ENCODE measurements at regions of chr22 and their contacts with region 1.

Region 1: DNA sequence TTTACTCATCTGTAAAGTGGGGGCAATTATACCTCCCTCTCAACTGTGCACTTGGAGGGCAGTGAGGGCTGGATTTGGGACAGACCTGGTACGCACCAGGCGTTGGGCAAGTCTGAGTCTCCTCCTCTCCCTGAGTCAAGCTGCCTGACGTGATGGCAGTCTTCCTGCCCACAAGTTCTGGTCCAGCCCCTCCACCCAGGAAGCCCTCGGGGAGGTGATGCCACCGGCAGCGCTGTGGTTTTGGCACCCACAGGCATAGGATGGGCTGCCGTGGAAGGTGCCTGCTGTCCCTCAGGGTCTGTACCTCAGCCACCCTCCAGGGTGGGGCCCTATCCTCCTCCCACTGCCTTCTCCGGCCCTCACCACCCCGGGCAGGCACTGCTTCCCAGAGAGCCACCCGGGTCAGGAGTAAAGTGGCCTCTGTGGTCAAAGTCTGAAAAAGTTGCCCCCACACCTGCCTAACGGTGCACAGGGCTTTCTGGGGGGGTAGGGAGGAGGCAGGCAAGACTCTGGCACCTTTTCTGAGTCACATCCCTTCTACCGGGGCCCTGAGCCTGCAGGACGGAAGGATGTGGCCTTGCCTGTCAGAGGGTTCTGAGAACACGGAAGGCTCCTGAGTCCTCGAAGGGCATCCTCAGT is 6.5 kb upstream of the APOBEC3H start:
- DNase-seq: peak; percentile 92
- ATAC-seq: peak; percentile 85
- H3K4me3 Mint-ChIP-seq: peak overlapping the region; percentile 45
- H3K27ac Mint-ChIP-seq: peak overlapping the region; percentile 95
- H3K4me1 Mint-ChIP-seq: peaks cover 81% of the 10 kb centered on the region
- H3K27me3 Mint-ChIP-seq: no peaks in the 10 kb centered on the region

Region 2: DNA sequence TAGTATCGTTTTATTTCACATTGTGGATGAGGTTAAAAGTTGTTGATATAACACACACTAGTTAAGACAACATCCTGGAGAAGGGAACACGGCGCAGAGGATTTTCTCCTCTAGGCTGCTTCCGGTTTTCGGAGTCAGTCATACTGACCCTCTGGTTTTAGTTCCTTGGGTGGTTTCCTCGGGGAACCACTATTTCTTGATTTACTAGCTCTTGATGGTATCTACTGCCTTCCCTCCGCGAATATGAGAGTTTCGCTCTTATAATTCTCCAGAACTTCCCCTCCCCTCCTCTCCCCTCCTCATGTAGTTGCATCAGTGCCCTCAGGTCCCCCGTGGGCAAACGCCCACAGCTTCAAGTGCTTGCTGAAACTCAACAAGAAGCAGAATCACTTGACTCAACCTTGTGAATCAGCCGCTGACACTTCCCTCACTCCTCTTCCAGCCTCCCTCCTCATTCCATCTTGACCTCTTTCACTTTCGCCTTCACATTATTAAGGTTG is 149.0 kb before region 1 on chr22:
- CTCF ChIA-PET with region 1: no interaction called
- POLR2A ChIA-PET with region 1: no interaction called
- intact Hi-C with region 1: loop called in 1 of 2 experiments (anchors 1 kb)
- DNase-seq: peak; percentile 88
- ATAC-seq: peak; percentile 88
- H3K4me3 Mint-ChIP-seq: peak overlapping the region; percentile 59
- H3K27ac Mint-ChIP-seq: peak overlapping the region; percentile 87
- H3K4me1 Mint-ChIP-seq: peaks cover 42% of the 10 kb centered on the region
- H3K27me3 Mint-ChIP-seq: peaks cover 36% of the 10 kb centered on the region

Region 3: GRCh38 chr22:38981992-38982927 is 108.3 kb before region 1 on chr22 and contains the start of gene APOBEC3B:
- CTCF ChIA-PET with region 1: no interaction called
- POLR2A ChIA-PET with region 1: no interaction called
- intact Hi-C with region 1: loop called in 1 of 2 experiments (anchors 1 kb)
- DNase-seq: peak; percentile 82
- ATAC-seq: peak; percentile 57
- H3K4me3 Mint-ChIP-seq: peak within 1 kb of the TSS; percentile 55
- H3K27ac Mint-ChIP-seq: peak within 1 kb of the TSS; percentile 74
- H3K4me1 Mint-ChIP-seq: peaks cover 53% of the 10 kb centered on the region
- H3K27me3 Mint-ChIP-seq: peaks cover 3% of the 10 kb centered on the region
- total RNA-seq, gene APOBEC3B: 8.0 to 8.5 TPM

Region 4: GRCh38 chr22:39013942-39014722 is 76.4 kb before region 1 on chr22 and contains the start of gene APOBEC3C:
- CTCF ChIA-PET with region 1: interaction called, 3 read pairs
- POLR2A ChIA-PET with region 1: no interaction called
- intact Hi-C with region 1: loop called in 1 of 2 experiments (anchors 2 kb)
- DNase-seq: peak; percentile 89
- ATAC-seq: peak; percentile 96
- H3K4me3 Mint-ChIP-seq: peak within 1 kb of the TSS; percentile 93
- H3K27ac Mint-ChIP-seq: peak within 1 kb of the TSS; percentile 95
- H3K4me1 Mint-ChIP-seq: peaks cover 33% of the 10 kb centered on the region
- H3K27me3 Mint-ChIP-seq: no peaks in the 10 kb centered on the region
- total RNA-seq, gene APOBEC3C: 75.3 to 98.5 TPM

Region 5: DNA sequence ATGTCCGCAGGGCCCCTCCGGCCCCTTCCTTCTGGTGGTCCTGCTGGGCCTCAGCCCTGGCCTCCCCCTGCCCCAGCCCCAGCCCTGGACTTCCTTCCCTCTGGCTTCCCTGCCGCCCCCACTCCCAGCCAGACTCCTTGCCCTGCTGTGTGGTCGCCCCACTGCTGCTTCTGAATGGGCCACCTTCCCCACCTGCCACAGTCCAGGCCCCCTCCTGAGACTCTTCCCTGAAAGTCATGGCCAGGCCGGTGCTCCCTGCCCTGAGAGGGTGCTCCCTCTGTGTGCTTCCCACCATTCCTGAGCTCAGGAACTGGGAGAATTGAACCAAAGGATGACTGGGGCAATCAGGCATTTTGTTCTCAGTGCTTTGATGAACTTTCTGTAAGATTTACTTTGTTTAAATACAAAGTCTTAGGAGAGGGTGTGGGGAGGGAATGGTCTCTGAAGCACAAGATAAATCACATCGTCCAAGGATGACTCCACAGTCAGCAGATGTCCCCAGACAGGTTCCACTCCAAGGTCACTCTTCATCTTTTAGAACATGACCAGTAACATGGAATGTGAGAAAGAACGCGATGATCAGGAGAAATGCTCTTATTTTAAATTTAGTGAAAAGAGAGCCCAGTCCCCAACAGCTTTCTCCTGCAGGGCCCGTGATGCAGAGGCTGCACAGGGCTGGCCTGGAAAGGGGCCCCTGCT is 68.8 kb before region 1 on chr22:
- CTCF ChIA-PET with region 1: no interaction called
- POLR2A ChIA-PET with region 1: no interaction called
- intact Hi-C with region 1: loop called in 1 of 2 experiments (anchors 5 kb)
- DNase-seq: no peak
- ATAC-seq: no peak
- H3K4me3 Mint-ChIP-seq: peak overlapping the region; percentile 95
- H3K27ac Mint-ChIP-seq: peak overlapping the region; percentile 95
- H3K4me1 Mint-ChIP-seq: peaks cover 53% of the 10 kb centered on the region
- H3K27me3 Mint-ChIP-seq: no peaks in the 10 kb centered on the region

Region 6: DNA sequence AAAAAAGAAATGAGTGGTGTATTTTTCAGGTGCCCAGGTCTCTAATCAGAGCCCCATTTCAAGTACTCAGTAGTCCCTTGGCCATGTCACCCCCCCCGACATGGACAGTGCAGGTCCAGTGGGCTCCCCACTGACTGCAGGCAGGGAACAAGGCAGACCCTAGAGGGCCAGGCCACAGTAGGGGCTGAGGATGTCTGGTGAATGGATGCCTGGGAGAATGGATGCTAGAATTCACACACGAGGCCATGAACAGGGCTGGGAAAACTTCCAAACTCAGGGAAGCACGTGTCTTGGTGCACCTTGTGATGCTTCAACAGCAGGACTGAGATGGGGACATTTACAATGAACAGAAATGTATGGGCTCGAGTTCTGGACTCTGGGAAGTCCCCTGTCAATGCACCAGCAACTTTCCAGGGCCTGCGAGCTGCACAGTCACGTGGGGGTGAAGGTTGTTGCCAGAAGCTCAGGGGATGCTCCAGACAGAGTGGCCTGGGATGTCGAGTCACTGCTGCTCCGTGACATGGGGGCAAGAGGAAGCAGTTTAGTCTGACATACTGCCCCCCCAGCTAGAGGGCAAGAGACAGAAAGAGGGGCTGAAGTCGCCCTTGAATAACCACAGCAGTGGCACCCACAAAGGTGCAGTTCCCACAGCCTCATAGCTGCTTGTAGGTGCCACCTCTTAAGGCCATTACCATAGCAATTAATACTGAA is 10.3 kb before region 1 on chr22:
- CTCF ChIA-PET with region 1: interaction called, 5 read pairs
- POLR2A ChIA-PET with region 1: no interaction called
- intact Hi-C with region 1: loop called in 1 of 2 experiments (anchors 1 kb)
- DNase-seq: peak; percentile 4
- ATAC-seq: no peak
- H3K4me3 Mint-ChIP-seq: no peak overlapping the region
- H3K27ac Mint-ChIP-seq: no peak overlapping the region
- H3K4me1 Mint-ChIP-seq: peaks cover 39% of the 10 kb centered on the region
- H3K27me3 Mint-ChIP-seq: no peaks in the 10 kb centered on the region

Region 7: GRCh38 chr22:39117585-39118191 is 27.1 kb after region 1 on chr22:
- CTCF ChIA-PET with region 1: interaction called, 3 read pairs
- POLR2A ChIA-PET with region 1: no interaction called
- intact Hi-C with region 1: loop called (anchors 1 to 2 kb)
- DNase-seq: peak; percentile 84
- ATAC-seq: peak; percentile 60
- H3K4me3 Mint-ChIP-seq: peak overlapping the region; percentile 10
- H3K27ac Mint-ChIP-seq: peak overlapping the region; percentile 86
- H3K4me1 Mint-ChIP-seq: peaks cover 54% of the 10 kb centered on the region
- H3K27me3 Mint-ChIP-seq: no peaks in the 10 kb centered on the region

Measured in activated CD4-positive, alpha-beta T cell treated with anti-CD3 and anti-CD28 coated beads for 36 hours (primary cell).